Left colon (tissue), 2 donors: ENCODE measurements at regions of chr19 and their contacts with region 1.

Region 1: GRCh38 chr19:45178262-45179071 is at the start of gene BLOC1S3:
- DNase-seq: peak; percentile 100
- ATAC-seq: peak; percentile 89
- total RNA-seq, gene BLOC1S3: 11.2 to 13.5 TPM

Region 2: GRCh38 chr19:45092747-45093678 is 85.5 kb before region 1 on chr19 and contains the start of gene PPP1R37:
- intact Hi-C with region 1: loop called in 1 of 2 experiments (anchors 10 kb)
- DNase-seq: peak; percentile 94 to 97
- ATAC-seq: peak; percentile 78
- total RNA-seq, gene PPP1R37: 31.6 to 33.1 TPM

Region 3: GRCh38 chr19:45211751-45212381 is 33.4 kb after region 1 on chr19:
- intact Hi-C with region 1: no loop called
- DNase-seq: no peak
- ATAC-seq: no peak